Left cardiac atrium (tissue), 4 donors: ENCODE measurements at regions of chr12 and their contacts with region 1.

Region 1: DNA sequence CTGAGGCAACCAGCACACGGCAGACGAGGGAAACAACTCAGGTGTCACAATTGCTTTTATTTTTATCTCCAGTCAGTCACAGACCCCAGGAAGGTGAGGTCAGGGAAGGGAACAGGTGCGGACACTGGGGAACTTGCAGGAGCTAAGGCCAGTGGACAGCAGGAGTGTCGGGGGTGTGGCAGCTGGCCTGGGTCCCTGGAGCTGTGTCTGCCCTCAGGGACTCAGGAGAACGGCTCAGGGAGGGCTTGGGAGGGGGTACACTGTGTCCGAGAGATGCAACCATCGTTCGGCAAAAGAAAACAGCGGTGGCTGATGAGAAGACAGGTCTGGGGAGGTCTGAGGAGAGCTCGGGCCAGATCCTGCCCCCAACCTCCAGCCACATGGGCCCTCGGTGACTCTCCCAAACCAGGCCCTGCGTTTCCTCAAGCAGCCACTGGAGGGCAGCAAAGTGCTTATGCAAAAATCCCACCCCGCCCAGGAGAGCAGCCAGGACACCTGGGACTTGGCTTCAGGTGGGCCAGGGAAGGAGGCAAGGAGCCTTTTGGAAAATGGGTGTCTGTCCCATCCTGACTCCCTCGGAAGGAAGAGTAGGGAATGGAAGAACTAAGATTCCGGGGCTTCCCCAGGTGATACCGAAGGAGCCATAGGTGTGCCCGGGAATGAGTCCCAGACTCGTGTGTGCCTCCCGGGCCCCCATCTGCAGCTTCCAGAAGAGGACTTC is 24.1 kb upstream of the BCDIN3D start:
- DNase-seq: peak; percentile 78
- ATAC-seq: peak in 1 of 2 donors; percentile 12

Region 2: DNA sequence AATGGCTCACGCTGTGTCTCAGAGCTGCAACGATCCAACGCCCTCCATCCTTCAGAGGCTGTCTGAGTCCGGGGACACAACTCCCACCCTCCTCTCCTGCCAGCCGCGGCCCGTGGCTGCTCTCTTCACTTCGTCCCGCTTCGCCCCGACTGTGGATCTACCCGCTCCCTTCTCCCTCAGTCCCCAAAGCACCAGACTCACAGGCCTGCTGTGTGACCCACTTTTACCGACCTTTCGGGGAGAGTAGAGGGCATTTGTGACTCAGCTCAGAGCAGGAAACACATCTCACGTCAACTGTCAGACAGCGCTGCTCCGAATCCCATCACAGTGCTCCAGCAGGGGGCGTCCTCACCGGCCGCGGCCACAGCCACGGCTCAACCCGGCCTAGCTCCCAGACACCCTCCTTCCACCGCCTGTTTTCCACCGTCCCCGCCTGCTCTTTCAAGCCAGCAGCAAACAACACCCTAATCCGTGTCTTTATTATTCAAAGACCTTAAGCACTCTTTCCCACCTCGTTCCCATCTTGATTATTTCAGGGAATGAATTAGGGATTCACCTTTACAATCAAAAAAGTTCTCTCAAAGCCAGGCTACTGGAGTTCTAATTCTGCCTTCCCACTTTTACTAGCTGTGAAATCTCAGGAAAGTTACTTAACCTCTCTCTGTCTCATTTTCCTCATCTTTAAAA is 78.5 kb after region 1 on chr12:
- intact Hi-C with region 1: loop called (anchors 5 to 10 kb)
- DNase-seq: peak; percentile 88
- ATAC-seq: peak; percentile 96 to 97

Region 3: DNA sequence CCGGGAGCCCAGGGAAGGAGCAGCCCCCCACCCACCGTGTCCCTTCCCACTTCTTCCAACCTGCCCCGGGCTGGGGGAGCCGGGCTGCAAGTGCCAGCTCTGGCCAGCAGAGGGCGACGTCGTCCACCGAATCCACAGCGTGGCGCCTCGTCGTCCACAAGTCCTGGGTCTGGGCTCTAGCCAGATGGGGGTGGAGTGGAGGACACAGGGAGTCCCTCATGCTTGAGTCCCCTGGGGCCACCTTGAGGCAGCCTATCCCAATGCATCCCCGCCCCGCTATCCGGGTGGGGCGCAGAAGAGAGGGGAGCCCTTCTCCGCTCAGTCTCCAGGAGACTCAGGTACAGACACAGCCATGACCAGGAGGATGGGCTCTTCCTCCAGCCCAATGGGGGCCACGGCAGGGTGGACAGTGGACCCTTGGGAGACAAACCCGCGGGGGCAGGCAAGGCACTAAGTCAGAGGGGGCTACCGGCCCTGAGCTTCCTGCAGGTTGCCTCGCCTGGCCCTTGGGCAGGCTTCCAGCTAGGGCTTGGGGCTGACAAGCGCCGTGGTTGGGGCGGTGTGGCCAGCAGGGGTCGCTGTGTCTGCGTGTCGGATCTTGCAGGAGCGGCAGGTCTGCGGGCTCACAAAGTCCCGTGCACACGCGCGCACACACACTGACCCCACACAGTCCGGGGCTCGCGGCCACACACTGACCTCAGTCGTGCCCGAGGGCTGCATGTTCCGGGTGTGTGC is 100.2 kb after region 1 on chr12:
- intact Hi-C with region 1: loop called in 1 of 2 experiments (anchors 2 kb)
- DNase-seq: peak; percentile 93
- ATAC-seq: peak; percentile 78 to 85

Region 4: DNA sequence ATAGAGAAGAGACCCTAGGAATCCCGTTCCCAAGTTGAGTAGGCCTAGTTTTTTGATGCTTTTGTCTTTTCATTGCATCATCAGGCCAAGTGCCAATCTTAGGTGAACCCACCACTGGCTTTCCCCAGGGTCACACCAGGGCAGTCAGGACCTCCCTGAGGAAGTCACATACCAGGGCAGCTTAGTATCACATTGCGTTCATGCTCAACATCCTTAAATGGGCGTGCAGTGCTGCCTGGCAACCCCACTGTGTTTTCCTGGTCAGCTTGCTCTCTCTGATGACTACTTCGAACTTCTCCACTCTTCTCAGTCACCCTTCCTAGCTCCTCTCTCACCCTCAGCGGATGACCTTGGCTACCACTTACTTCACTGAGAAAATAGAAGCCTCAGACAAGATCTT is 199.4 kb after region 1 on chr12:
- intact Hi-C with region 1: loop called in 1 of 2 experiments (anchors 5 kb)
- DNase-seq: no peak
- ATAC-seq: peak; percentile 24 to 51